Natural killer cell (primary cell): ENCODE measurements at regions of chr17 and their contacts with region 1.

Region 1: GRCh38 chr17:2266045-2266864 is 37.3 kb downstream of the SMG6 start:
- DNase-seq: peak; percentile 78 to 95
- ATAC-seq: peak; percentile 76 to 90 (median 86)
- H3K4me3 ChIP-seq: peak overlapping the region; percentile 17
- H3K4me3 Mint-ChIP-seq: peak overlapping the region; percentile 85
- H3K27ac ChIP-seq: peak overlapping the region; percentile 96
- H3K27ac Mint-ChIP-seq: peak overlapping the region; percentile 96 to 99
- H3K4me1 ChIP-seq: peaks cover 73% of the 10 kb centered on the region
- H3K4me1 Mint-ChIP-seq: peaks cover 63 to 72% of the 10 kb centered on the region in 2 donors
- H3K27me3 ChIP-seq: no peaks in the 10 kb centered on the region
- H3K27me3 Mint-ChIP-seq: no peaks in the 10 kb centered on the region
- CTCF ChIP-seq: no peak

Region 2: GRCh38 chr17:2192367-2193057 is 73.7 kb before region 1 on chr17:
- intact Hi-C with region 1: loop called (anchors 5 kb)
- DNase-seq: peak; percentile 52 to 79
- ATAC-seq: peak; percentile 83 to 97 (median 90)
- H3K4me3 ChIP-seq: no peak overlapping the region
- H3K4me3 Mint-ChIP-seq: peak overlapping the region; percentile 78
- H3K27ac ChIP-seq: peak overlapping the region; percentile 50
- H3K27ac Mint-ChIP-seq: peak overlapping the region; percentile 91 to 92
- H3K4me1 ChIP-seq: peaks cover 39% of the 10 kb centered on the region
- H3K4me1 Mint-ChIP-seq: peaks cover 81 to 82% of the 10 kb centered on the region in 2 donors
- H3K27me3 ChIP-seq: no peaks in the 10 kb centered on the region
- H3K27me3 Mint-ChIP-seq: no peaks in the 10 kb centered on the region
- CTCF ChIP-seq: no peak

Region 3: GRCh38 chr17:2222901-2223616 is 43.2 kb before region 1 on chr17:
- intact Hi-C with region 1: loop called (anchors 1 kb)
- DNase-seq: peak; percentile 80 to 91
- ATAC-seq: peak; percentile 90 to 97 (median 94)
- H3K4me3 ChIP-seq: no peak overlapping the region
- H3K4me3 Mint-ChIP-seq: peak overlapping the region; percentile 72
- H3K27ac ChIP-seq: peak overlapping the region; percentile 35
- H3K27ac Mint-ChIP-seq: peak overlapping the region; percentile 80 to 88
- H3K4me1 ChIP-seq: peaks cover 22% of the 10 kb centered on the region
- H3K4me1 Mint-ChIP-seq: peaks cover 28 to 31% of the 10 kb centered on the region in 2 donors
- H3K27me3 ChIP-seq: no peaks in the 10 kb centered on the region
- H3K27me3 Mint-ChIP-seq: no peaks in the 10 kb centered on the region
- CTCF ChIP-seq: no peak

Region 4: DNA sequence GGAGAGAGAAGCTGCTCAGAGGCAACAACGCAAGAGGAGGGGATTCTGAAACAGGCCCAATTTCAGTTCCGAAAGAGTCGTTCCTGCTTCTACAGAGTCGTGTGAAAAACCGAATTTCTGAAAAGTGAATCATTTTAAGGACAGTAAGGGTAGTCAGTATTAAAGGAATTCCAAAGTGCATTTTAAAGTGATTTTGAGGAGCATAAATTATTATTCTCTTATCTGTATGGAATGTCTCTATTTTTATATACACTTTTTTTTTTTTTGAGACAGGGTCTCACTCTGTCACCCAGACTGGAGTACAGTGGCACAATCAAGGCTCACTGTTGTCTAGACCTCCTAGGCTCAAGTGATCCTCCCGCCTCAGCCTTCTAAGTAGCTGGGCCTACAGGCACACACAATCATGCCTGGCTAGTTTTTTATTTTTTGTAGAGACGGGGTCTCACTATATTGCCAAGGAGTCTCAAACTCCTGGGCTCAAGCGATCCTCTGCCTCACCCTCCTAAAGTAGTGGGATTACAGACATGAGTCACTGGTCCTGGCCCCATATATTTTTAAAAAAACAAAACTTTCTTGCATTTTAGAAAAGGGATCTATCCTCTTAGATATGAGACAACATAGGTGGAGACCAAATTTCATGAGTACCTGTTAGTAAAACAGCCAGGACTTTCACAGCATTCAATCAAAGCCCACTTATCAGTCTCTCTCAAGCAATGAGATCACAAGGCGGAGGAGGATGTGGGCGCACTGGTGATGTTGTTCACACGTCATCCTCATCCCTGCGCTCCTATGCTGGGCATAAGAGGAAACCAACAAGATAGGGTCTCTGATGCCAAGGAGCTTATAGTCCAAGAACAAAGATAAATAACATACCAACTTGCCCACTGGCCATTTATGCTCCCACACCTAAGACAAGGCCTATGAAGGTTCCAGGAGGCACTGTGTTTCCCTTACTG is 15.8 kb before region 1 on chr17:
- intact Hi-C with region 1: loop called (anchors 2 kb)
- DNase-seq: peak in 1 of 2 donors; percentile 77
- ATAC-seq: peak; percentile 65 to 85 (median 84)
- H3K4me3 ChIP-seq: no peak overlapping the region
- H3K4me3 Mint-ChIP-seq: no peak overlapping the region
- H3K27ac ChIP-seq: no peak overlapping the region
- H3K27ac Mint-ChIP-seq: peak overlapping the region; percentile 82 to 83
- H3K4me1 ChIP-seq: peaks cover 18% of the 10 kb centered on the region
- H3K4me1 Mint-ChIP-seq: peaks cover 38 to 46% of the 10 kb centered on the region in 2 donors
- H3K27me3 ChIP-seq: no peaks in the 10 kb centered on the region
- H3K27me3 Mint-ChIP-seq: no peaks in the 10 kb centered on the region
- CTCF ChIP-seq: no peak

Region 5: GRCh38 chr17:2282297-2282873 is 16.1 kb after region 1 on chr17:
- intact Hi-C with region 1: loop called (anchors 2 kb)
- DNase-seq: peak in 1 of 2 donors; percentile 82
- ATAC-seq: peak in 2 of 3 donors; percentile 66 to 89
- H3K4me3 ChIP-seq: no peak overlapping the region
- H3K4me3 Mint-ChIP-seq: no peak overlapping the region
- H3K27ac ChIP-seq: no peak overlapping the region
- H3K27ac Mint-ChIP-seq: peak overlapping the region; percentile 23 to 68
- H3K4me1 ChIP-seq: no peaks in the 10 kb centered on the region
- H3K4me1 Mint-ChIP-seq: peaks cover 9 to 14% of the 10 kb centered on the region in 2 donors
- H3K27me3 ChIP-seq: no peaks in the 10 kb centered on the region
- H3K27me3 Mint-ChIP-seq: no peaks in the 10 kb centered on the region
- CTCF ChIP-seq: peak; percentile 66

Region 6: DNA sequence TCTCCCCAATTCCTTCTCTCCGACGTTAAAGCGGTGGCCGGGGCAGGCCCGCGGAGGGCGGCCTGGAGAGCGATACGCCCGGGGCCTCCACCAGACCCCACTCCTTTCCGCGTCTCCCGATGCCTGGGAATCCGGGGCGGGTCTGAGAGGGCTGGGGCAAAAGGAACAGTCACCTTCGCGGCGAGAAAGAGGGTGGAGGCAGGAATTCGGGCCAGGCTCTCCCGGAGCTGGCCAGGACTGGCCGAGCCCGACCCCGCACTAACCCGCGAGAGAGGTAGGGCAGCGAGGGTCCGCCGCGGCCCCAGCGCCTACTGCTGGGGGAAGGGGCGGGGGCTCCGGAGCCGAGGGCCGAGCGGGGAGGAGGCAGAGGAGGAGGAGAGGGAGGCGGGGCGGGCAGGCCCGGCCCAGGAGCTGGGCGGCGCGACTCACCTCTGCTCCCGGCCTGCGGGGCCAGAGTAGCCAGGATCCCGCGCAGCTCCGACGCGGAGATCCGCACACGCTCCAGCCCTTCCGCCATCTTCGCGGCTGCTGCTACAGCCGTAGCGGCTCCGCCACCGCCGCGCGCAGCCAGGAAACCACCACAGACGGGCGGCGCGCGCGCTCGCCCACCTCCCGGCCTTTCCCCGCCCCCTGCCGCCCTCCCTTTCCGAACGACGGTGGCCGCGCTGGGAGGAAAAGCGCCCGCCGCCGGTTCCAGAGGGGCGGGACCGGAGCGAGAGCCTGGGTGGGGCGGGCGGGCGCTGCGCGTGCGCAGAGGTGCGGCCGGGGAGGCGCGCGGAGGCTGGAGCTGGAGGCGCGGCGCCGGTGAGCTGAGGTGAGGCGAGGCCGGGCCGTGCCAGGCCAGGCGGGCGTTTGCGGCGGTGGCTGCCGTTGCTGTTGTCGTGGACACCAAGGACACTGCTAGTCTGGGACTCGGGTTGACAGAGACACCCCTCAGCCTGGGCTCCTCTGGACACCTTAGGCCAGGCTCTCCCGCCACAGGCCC is 37.2 kb after region 1 on chr17 and contains the starts of genes SMG6 and SRR:
- intact Hi-C with region 1: loop called (anchors 2 kb)
- DNase-seq: peak; percentile 87 to 97
- ATAC-seq: peak; percentile 89 to 98 (median 93)
- H3K4me3 ChIP-seq: peak within 1 kb of the TSS; percentile 70
- H3K4me3 Mint-ChIP-seq: peak within 1 kb of the TSS; percentile 87
- H3K27ac ChIP-seq: peak within 1 kb of the TSS; percentile 41
- H3K27ac Mint-ChIP-seq: peak within 1 kb of the TSS; percentile 64 to 82
- H3K4me1 ChIP-seq: peaks cover 19% of the 10 kb centered on the region
- H3K4me1 Mint-ChIP-seq: peaks cover 34 to 46% of the 10 kb centered on the region in 2 donors
- H3K27me3 ChIP-seq: no peaks in the 10 kb centered on the region
- H3K27me3 Mint-ChIP-seq: no peaks in the 10 kb centered on the region
- CTCF ChIP-seq: no peak
- total RNA-seq, gene SMG6: 41.6 to 49.4 (median 48.2) TPM
- total RNA-seq, gene SRR: 6.4 to 11.1 (median 7.9) TPM

Region 7: GRCh38 chr17:2814481-2815341 is 548.5 kb after region 1 on chr17:
- intact Hi-C with region 1: loop called (anchors 2 kb)
- DNase-seq: peak; percentile 91 to 98
- ATAC-seq: peak; percentile 65 to 87 (median 77)
- H3K4me3 ChIP-seq: peak overlapping the region; percentile 42
- H3K4me3 Mint-ChIP-seq: peak overlapping the region; percentile 72
- H3K27ac ChIP-seq: peak overlapping the region; percentile 79
- H3K27ac Mint-ChIP-seq: peak overlapping the region; percentile 89 to 92
- H3K4me1 ChIP-seq: peaks cover 79% of the 10 kb centered on the region
- H3K4me1 Mint-ChIP-seq: peaks cover 46 to 64% of the 10 kb centered on the region in 2 donors
- H3K27me3 ChIP-seq: no peaks in the 10 kb centered on the region
- H3K27me3 Mint-ChIP-seq: no peaks in the 10 kb centered on the region
- CTCF ChIP-seq: no peak

Region 8: DNA sequence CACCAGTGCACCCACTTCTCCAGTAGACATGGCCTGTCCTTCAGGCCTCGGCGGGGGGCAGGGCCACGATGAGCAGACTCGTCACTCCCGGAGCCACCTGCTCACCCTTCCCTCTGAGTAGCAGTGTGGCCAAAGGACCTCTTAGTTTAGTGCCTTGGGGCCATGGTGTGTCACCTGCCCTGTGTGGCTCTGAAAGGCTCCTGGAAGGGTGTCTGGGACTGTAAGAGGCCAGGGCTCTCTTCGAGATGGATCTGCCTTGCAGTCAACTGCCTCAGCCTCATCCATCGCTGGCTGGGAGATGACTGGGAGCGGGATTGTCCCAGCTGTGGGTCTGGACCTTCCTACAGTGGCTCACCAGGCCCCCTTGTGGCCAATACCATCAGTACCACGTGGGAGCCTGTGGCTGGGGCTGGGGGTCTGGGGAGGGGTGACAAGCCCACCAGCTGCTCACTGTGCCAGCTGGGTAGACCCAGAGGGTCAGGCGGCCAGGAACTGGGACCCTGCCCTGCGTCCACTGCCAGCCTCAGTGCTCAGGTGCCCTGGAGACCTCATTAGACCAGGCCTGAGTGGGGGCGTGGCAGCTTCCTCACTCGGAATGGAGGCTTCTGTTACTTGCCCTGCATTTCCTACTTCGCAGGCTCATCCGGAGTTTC is 663.8 kb after region 1 on chr17:
- intact Hi-C with region 1: no loop called
- DNase-seq: peak in 1 of 2 donors; percentile 48
- ATAC-seq: peak in 1 of 3 donors; percentile 58
- H3K4me3 ChIP-seq: no peak overlapping the region
- H3K4me3 Mint-ChIP-seq: no peak overlapping the region
- H3K27ac ChIP-seq: no peak overlapping the region
- H3K27ac Mint-ChIP-seq: peak overlapping the region; percentile 77 to 79
- H3K4me1 ChIP-seq: peaks cover 45% of the 10 kb centered on the region
- H3K4me1 Mint-ChIP-seq: peaks cover 58 to 82% of the 10 kb centered on the region in 2 donors
- H3K27me3 ChIP-seq: no peaks in the 10 kb centered on the region
- H3K27me3 Mint-ChIP-seq: no peaks in the 10 kb centered on the region
- CTCF ChIP-seq: peak; percentile 58